Activated T-helper 2 cell treated with anti-CD3 and anti-CD28 coated beads, Interferon-gamma antibody, Interleukin-2, Interleukin-4, amounts not matched to agents 10 μg/mL and 5 μg/mL and 100 μg/mL, durations not matched to agents 14 hours and 24 hours and 36 hours (primary cell): ENCODE measurements at regions of chr14 and their contacts with region 1.

Region 1: GRCh38 chr14:83463500-83464098 is 1929.9 kb upstream of the SEL1L start:
- DNase-seq: no peak
- H3K4me3 Mint-ChIP-seq: no peak overlapping the region
- H3K27ac Mint-ChIP-seq: no peak overlapping the region
- H3K4me1 Mint-ChIP-seq: no peaks in the 10 kb centered on the region
- H3K27me3 Mint-ChIP-seq: no peaks in the 10 kb centered on the region

Region 2: GRCh38 chr14:81990312-81990761 is 1473.3 kb before region 1 on chr14:
- intact Hi-C with region 1: loop called (anchors 10 kb)
- DNase-seq: peak; percentile 12
- H3K4me3 Mint-ChIP-seq: no peak overlapping the region
- H3K27ac Mint-ChIP-seq: no peak overlapping the region
- H3K4me1 Mint-ChIP-seq: peaks cover 3% of the 10 kb centered on the region
- H3K27me3 Mint-ChIP-seq: no peaks in the 10 kb centered on the region